Ascending aorta (tissue), 2 donors: ENCODE measurements at regions of chr9 and their contacts with region 1.

Region 1: GRCh38 chr9:8821910-8822666 is 1022.5 kb upstream of the DMAC1 start:
- DNase-seq: no peak
- H3K4me3 ChIP-seq: no peak overlapping the region
- H3K27ac ChIP-seq: peak overlapping the region in 1 of 2 donors; percentile 13
- H3K4me1 ChIP-seq: peaks cover 0 to 2% of the 10 kb centered on the region in 2 donors
- H3K27me3 ChIP-seq: no peaks in the 10 kb centered on the region
- CTCF ChIP-seq: no peak

Region 2: GRCh38 chr9:8762479-8763085 is 59.5 kb before region 1 on chr9:
- intact Hi-C with region 1: loop called (anchors 10 kb)
- DNase-seq: no peak
- H3K4me3 ChIP-seq: no peak overlapping the region
- H3K27ac ChIP-seq: no peak overlapping the region
- H3K4me1 ChIP-seq: peaks cover 0 to 5% of the 10 kb centered on the region in 2 donors
- H3K27me3 ChIP-seq: no peaks in the 10 kb centered on the region
- CTCF ChIP-seq: no peak